ENCODE measurements at regions of chrX and their contacts with region 1.

Region 1: GRCh38 chrX:129693354-129693753 is 38.6 kb upstream of the APLN start:
- DNase-seq: no peak
- ATAC-seq: no peak

Region 2: GRCh38 chrX:129478516-129478915 is 214.8 kb before region 1 on chrX:
- intact Hi-C with region 1: no loop called
- DNase-seq: no peak
- ATAC-seq: no peak

Region 3: GRCh38 chrX:129706400-129707072 is 13.2 kb after region 1 on chrX:
- intact Hi-C with region 1: loop called (anchors 2 kb)
- DNase-seq: peak; percentile 64
- ATAC-seq: peak; percentile 26